CD4-positive, alpha-beta memory T cell (primary cell): ENCODE measurements at regions of chr1 and their contacts with region 1.

Region 1: GRCh38 chr1:198638894-198639635 is at the start of gene PTPRC:
- DNase-seq: peak in 4 of 5 donors; percentile 50 to 67 (median 60)
- H3K4me3 ChIP-seq: peak within 1 kb of the TSS; percentile 61 to 78
- H3K4me3 Mint-ChIP-seq: peak within 1 kb of the TSS; percentile 82 to 99 (median 94)
- H3K27ac ChIP-seq: peak within 1 kb of the TSS; percentile 83
- H3K27ac Mint-ChIP-seq: peak within 1 kb of the TSS; percentile 86 to 98 (median 95)
- H3K4me1 ChIP-seq: peaks cover 60% of the 10 kb centered on the region
- H3K4me1 Mint-ChIP-seq: peaks cover 34 to 46% (median 39%) of the 10 kb centered on the region in 4 donors
- H3K27me3 ChIP-seq: no peaks in the 10 kb centered on the region
- H3K27me3 Mint-ChIP-seq: no peaks in the 10 kb centered on the region
- total RNA-seq, gene PTPRC: 974 to 987 TPM

Region 2: DNA sequence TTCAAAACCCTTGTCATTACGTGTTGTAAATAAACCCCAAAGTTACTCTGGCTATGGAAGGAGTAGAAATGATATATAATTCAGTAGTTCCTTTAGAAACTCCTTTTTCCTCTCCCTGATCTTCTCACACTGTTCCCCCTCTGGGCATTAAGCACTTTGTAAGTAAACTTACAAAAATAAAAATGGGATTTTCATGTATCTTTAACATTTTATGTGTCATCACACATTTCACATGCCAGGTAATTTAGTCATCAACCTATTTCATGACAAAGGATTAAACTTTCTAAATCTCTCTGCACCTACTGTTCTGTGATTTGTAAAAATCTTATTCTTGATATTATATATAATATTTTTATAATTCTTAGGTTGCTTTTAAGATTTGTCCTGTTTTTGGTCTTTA is 305.3 kb before region 1 on chr1:
- CTCF ChIA-PET with region 1: no interaction called
- POLR2A ChIA-PET with region 1: no interaction called
- intact Hi-C with region 1: no loop called
- DNase-seq: no peak
- H3K4me3 ChIP-seq: no peak overlapping the region
- H3K4me3 Mint-ChIP-seq: no peak overlapping the region
- H3K27ac ChIP-seq: no peak overlapping the region
- H3K27ac Mint-ChIP-seq: no peak overlapping the region
- H3K4me1 ChIP-seq: no peaks in the 10 kb centered on the region
- H3K4me1 Mint-ChIP-seq: no peaks in the 10 kb centered on the region
- H3K27me3 ChIP-seq: no peaks in the 10 kb centered on the region
- H3K27me3 Mint-ChIP-seq: peaks cover 2 to 4% of the 10 kb centered on the region in 2 donors

Region 3: DNA sequence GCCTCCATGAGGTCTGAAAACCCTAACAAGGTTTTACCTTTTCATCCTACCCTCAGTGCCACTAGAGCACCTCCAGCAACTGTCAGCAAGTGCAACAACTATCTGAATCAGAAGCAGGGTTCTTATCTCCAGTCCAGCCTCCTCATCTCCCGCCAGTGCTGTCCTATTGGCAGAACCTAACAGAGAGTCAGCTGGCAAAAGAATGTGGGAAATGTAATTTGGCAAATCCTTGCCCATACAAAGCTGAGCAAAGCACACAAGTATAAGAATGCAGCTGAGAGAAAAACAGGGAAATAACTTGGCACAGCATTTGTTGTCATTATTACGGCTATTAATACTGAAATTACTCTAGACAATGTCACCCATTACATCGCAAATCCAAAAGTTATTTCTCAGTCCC is 222.8 kb before region 1 on chr1:
- CTCF ChIA-PET with region 1: no interaction called
- POLR2A ChIA-PET with region 1: no interaction called
- intact Hi-C with region 1: no loop called
- DNase-seq: no peak
- H3K4me3 ChIP-seq: no peak overlapping the region
- H3K4me3 Mint-ChIP-seq: no peak overlapping the region
- H3K27ac ChIP-seq: no peak overlapping the region
- H3K27ac Mint-ChIP-seq: no peak overlapping the region
- H3K4me1 ChIP-seq: no peaks in the 10 kb centered on the region
- H3K4me1 Mint-ChIP-seq: no peaks in the 10 kb centered on the region
- H3K27me3 ChIP-seq: no peaks in the 10 kb centered on the region
- H3K27me3 Mint-ChIP-seq: peaks cover 12 to 13% of the 10 kb centered on the region in 2 donors

Region 4: DNA sequence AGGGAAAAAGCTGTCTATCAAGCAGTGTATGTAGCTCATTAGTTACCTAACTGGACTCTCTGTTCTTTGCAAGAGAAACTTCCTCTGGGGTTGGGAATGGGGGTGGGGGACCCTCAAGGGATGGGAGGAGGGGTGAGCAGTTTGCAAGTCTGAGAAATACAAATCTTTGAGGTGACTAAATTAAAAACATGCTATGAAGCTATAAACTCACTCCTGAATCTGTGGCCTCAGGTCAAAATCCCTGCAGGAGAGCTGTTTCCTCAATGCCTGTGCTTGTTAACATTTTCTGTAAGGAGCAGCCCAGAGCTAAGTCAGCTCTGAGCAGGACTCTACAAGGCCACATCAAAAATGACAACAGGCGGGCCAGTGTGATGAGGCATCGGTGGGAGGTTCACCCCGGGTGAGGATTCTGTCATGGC is 33.0 kb before region 1 on chr1:
- CTCF ChIA-PET with region 1: interaction called, 5 read pairs
- POLR2A ChIA-PET with region 1: interaction called, 40 read pairs
- intact Hi-C with region 1: no loop called
- DNase-seq: no peak
- H3K4me3 ChIP-seq: no peak overlapping the region
- H3K4me3 Mint-ChIP-seq: peak overlapping the region in 2 of 8 donors; percentile 21 to 51
- H3K27ac ChIP-seq: no peak overlapping the region
- H3K27ac Mint-ChIP-seq: peak overlapping the region in 3 of 7 donors; percentile 43 to 77 (median 56)
- H3K4me1 ChIP-seq: peaks cover 66% of the 10 kb centered on the region
- H3K4me1 Mint-ChIP-seq: peaks cover 45 to 66% (median 56%) of the 10 kb centered on the region in 4 donors
- H3K27me3 ChIP-seq: no peaks in the 10 kb centered on the region
- H3K27me3 Mint-ChIP-seq: no peaks in the 10 kb centered on the region

Region 5: DNA sequence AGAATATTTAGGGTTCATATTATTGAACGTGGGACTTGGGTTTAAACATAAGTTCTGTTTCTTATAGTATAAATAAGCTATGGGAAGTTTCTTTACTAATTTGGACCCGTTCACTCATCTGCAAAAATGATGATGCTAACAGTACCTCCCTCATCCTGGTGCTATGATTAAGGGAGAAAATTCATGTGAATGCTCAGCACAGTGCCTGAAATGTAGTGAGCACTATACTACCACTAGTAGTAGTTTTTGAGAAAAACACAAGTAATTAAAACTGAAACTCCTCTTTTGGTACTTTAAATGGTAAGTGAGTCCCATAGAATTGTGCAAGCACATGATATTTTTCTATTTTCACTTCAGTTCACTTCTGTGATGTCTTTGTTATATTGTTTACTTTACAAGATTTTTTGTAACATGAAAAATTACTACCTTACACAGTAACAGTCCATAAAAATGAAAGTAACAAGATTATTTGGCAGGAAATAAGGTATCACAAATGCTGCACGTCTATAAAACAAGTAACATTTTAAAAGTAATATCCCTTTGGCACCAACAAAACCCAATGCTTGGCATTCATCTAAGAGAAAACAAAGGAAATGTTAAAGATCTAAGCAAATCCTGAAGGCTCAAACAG is 11.5 kb before region 1 on chr1:
- CTCF ChIA-PET with region 1: interaction called, 93 read pairs
- POLR2A ChIA-PET with region 1: interaction called, 494 read pairs
- intact Hi-C with region 1: loop called (anchors 1 kb)
- DNase-seq: peak in 1 of 5 donors; percentile 24
- H3K4me3 ChIP-seq: peak overlapping the region in 1 of 2 donors; percentile 26
- H3K4me3 Mint-ChIP-seq: peak overlapping the region; percentile 45 to 85 (median 79)
- H3K27ac ChIP-seq: peak overlapping the region; percentile 38
- H3K27ac Mint-ChIP-seq: peak overlapping the region; percentile 89 to 96 (median 91)
- H3K4me1 ChIP-seq: peaks cover 100% of the 10 kb centered on the region
- H3K4me1 Mint-ChIP-seq: peaks cover 77 to 96% (median 84%) of the 10 kb centered on the region in 4 donors
- H3K27me3 ChIP-seq: no peaks in the 10 kb centered on the region
- H3K27me3 Mint-ChIP-seq: no peaks in the 10 kb centered on the region

Region 6: GRCh38 chr1:198657550-198658064 is 18.5 kb after region 1 on chr1:
- CTCF ChIA-PET with region 1: interaction called, 4 read pairs
- POLR2A ChIA-PET with region 1: interaction called, 75 read pairs
- intact Hi-C with region 1: loop called (anchors 1 kb)
- DNase-seq: peak; percentile 58 to 73 (median 65)
- H3K4me3 ChIP-seq: peak overlapping the region; percentile 22 to 33
- H3K4me3 Mint-ChIP-seq: peak overlapping the region; percentile 59 to 87 (median 79)
- H3K27ac ChIP-seq: peak overlapping the region; percentile 93
- H3K27ac Mint-ChIP-seq: peak overlapping the region; percentile 96 to 99 (median 98)
- H3K4me1 ChIP-seq: peaks cover 91% of the 10 kb centered on the region
- H3K4me1 Mint-ChIP-seq: peaks cover 43 to 65% (median 58%) of the 10 kb centered on the region in 4 donors
- H3K27me3 ChIP-seq: no peaks in the 10 kb centered on the region
- H3K27me3 Mint-ChIP-seq: no peaks in the 10 kb centered on the region

Region 7: DNA sequence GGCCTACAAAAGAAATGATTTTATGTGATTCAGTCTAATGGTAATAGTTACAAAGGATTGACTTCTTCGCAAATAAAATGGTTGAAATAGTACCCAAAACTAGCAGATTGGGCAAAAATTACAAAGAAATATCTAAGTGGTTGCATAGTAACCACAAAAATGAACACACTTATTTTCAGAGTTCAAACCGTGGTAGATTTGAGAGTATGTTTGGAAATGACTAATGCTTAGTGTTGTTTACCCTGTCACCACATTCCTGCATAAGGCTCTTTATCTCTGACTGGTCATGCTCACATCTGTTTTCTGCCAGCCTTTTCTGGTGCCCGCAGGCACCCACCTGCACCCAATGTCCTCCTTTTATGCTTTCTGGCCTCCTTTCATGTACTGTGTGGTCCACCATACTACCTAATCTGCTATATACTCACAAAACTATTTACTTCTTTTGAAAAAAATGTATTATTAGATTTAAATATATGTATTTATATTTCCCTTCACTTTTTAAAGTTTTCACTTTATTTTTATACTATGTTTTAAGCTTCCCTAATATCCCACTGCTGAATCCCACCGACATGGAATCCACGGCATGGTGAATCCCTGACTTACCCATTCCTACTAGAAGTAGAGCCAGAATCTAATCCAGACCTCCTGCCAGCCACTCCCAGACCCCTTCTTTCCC is 30.1 kb after region 1 on chr1:
- CTCF ChIA-PET with region 1: no interaction called
- POLR2A ChIA-PET with region 1: interaction called, 427 read pairs
- intact Hi-C with region 1: no loop called
- DNase-seq: peak; percentile 56 to 81 (median 68)
- H3K4me3 ChIP-seq: no peak overlapping the region
- H3K4me3 Mint-ChIP-seq: peak overlapping the region; percentile 64 to 82 (median 76)
- H3K27ac ChIP-seq: peak overlapping the region; percentile 61
- H3K27ac Mint-ChIP-seq: peak overlapping the region; percentile 96 to 99 (median 97)
- H3K4me1 ChIP-seq: peaks cover 98% of the 10 kb centered on the region
- H3K4me1 Mint-ChIP-seq: peaks cover 75 to 95% (median 85%) of the 10 kb centered on the region in 4 donors
- H3K27me3 ChIP-seq: no peaks in the 10 kb centered on the region
- H3K27me3 Mint-ChIP-seq: no peaks in the 10 kb centered on the region